Activated CD8-positive, alpha-beta T cell treated with anti-CD3 and anti-CD28 coated beads, Interleukin-2, amount 10 ng/mL, durations not matched to agents 7 days and 5 days (primary cell): ENCODE measurements at regions of chr3 and their contacts with region 1.

Region 1: DNA sequence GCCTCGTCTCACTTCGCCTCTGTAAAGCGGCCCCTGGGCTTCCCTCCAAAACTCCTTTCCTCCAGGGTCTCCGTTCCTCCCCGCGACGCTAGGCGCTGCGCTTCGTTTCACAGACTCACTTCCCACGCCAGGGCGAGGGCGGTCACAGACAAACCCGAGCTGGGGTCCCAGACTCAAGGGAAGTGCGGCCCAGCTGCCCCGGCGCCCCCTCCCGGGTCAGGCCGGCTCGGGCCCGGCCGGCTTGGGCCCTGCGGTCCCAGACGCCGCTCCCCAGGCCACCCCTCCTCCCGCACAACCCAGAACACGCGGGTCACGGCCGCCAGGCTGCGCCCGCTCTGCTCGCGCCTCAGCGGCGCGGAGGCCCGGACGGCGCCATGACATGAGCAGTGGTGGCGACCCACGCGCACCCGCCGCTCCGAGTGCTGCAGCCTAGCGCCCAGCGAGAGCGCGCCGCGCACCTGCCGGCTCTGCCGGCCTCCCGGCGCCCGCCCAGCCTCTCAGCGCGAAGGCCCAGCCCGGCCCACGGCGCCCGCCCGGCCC is 547 bp downstream of the NUP210 start:
- DNase-seq: peak; percentile 63
- ATAC-seq: peak; percentile 62
- H3K4me3 Mint-ChIP-seq: peak overlapping the region; percentile 91
- H3K27ac Mint-ChIP-seq: peak overlapping the region; percentile 90
- H3K4me1 Mint-ChIP-seq: peaks cover 68% of the 10 kb centered on the region
- H3K27me3 Mint-ChIP-seq: no peaks in the 10 kb centered on the region

Region 2: DNA sequence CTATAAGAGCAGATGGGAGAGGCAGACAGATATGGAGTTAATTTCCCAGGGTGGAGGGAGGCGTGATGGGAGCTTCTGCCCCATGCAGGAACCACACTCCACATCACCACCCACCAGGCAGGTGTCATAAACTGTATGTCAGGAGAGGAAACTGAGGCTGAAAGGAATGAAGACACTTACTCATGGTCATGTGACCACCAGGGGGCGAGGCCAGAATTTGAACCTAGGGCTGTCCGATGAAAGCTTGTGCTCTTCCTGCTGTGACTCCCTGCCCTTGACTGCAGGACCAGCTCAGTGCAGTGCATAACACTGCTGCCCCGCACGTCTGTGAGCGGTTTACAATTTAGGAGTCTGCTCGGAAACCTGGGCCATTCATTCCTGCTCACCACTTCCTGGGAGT is 28.3 kb before region 1 on chr3:
- CTCF ChIA-PET with region 1: interaction called, 18 read pairs
- POLR2A ChIA-PET with region 1: no interaction called
- DNase-seq: no peak
- ATAC-seq: peak; percentile 24
- H3K4me3 Mint-ChIP-seq: no peak overlapping the region
- H3K27ac Mint-ChIP-seq: no peak overlapping the region
- H3K4me1 Mint-ChIP-seq: peaks cover 27% of the 10 kb centered on the region
- H3K27me3 Mint-ChIP-seq: no peaks in the 10 kb centered on the region

Region 3: GRCh38 chr3:13405614-13406013 is 14.0 kb before region 1 on chr3:
- CTCF ChIA-PET with region 1: interaction called, 10 read pairs
- POLR2A ChIA-PET with region 1: interaction called, 6 read pairs
- DNase-seq: no peak
- ATAC-seq: no peak
- H3K4me3 Mint-ChIP-seq: no peak overlapping the region
- H3K27ac Mint-ChIP-seq: no peak overlapping the region
- H3K4me1 Mint-ChIP-seq: peaks cover 28% of the 10 kb centered on the region
- H3K27me3 Mint-ChIP-seq: no peaks in the 10 kb centered on the region

Region 4: DNA sequence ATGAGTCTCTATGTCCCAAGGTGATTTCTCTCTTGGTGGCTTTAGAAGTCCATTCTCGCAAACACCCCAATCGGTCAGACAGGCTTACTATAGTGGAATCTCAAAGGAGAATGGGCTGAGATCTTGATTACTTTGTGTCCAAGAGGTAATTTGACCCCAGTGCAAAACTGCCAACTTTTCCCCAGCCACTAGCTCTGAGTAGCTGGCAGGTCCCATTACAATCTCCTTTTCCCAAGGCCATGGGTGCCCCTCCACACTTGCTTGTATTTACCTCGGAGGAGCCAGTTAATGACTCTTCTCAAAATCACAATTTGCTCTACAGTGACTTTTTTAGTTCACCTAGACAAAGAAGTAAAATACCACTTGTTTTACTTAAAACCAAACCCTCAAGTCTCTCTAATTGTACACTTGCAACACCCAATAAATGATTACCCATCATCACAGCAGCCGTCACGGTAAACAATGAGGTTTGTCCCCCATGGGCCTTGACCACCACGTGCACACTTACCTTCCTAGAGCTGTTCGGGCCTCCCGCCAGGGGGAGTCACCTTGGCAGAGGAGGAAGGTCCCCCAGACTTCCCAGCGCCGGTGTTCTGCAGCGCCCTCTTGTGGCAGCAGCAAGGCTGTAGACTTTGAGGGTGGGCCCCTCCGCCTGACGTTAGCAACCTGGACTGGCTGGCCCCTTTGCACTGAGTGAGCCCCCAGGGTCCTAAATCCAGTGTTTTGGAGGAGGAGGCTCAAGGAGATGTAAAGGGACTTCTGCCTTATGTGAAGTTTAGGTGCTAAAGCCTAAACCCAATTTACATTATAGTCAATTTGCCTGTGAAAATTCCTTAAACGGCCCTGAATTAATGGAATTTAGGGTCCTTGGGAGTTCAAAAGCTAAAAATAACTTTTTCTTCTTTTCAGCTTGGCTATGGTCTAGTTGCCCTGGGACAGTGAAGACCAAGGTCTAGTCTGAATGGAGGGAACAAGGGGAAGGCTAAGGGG is 41.9 kb after region 1 on chr3:
- CTCF ChIA-PET with region 1: interaction called, 169 read pairs
- POLR2A ChIA-PET with region 1: interaction called, 4 read pairs
- DNase-seq: peak; percentile 85
- ATAC-seq: peak; percentile 96
- H3K4me3 Mint-ChIP-seq: no peak overlapping the region
- H3K27ac Mint-ChIP-seq: no peak overlapping the region
- H3K4me1 Mint-ChIP-seq: no peaks in the 10 kb centered on the region
- H3K27me3 Mint-ChIP-seq: peaks cover 10% of the 10 kb centered on the region